ENCODE measurements at regions of chr11 and their contacts with region 1.

Region 1: GRCh38 chr11:112226062-112226830 is at the start of gene PTS:
- DNase-seq: peak; percentile 66 to 94 (median 82)
- ATAC-seq: peak; percentile 89
- H3K4me3 ChIP-seq: peak within 1 kb of the TSS; percentile 71 to 81
- H3K4me3 Mint-ChIP-seq: peak within 1 kb of the TSS; percentile 95
- H3K27ac ChIP-seq: peak within 1 kb of the TSS; percentile 91 to 100
- H3K27ac Mint-ChIP-seq: peak within 1 kb of the TSS; percentile 99
- H3K4me1 ChIP-seq: peaks cover 10% of the 10 kb centered on the region
- H3K4me1 Mint-ChIP-seq: peaks cover 31% of the 10 kb centered on the region
- H3K27me3 ChIP-seq: no peaks in the 10 kb centered on the region
- H3K27me3 Mint-ChIP-seq: no peaks in the 10 kb centered on the region
- CTCF ChIP-seq: no peak
- total RNA-seq, gene PTS: 83.5 to 87.9 TPM

Region 2: GRCh38 chr11:111851636-111852035 is 374.6 kb before region 1 on chr11:
- CTCF ChIA-PET with region 1: no interaction called
- POLR2A ChIA-PET with region 1: no interaction called
- intact Hi-C with region 1: no loop called
- DNase-seq: no peak
- ATAC-seq: no peak
- H3K4me3 ChIP-seq: no peak overlapping the region
- H3K4me3 Mint-ChIP-seq: no peak overlapping the region
- H3K27ac ChIP-seq: no peak overlapping the region
- H3K27ac Mint-ChIP-seq: no peak overlapping the region
- H3K4me1 ChIP-seq: no peaks in the 10 kb centered on the region
- H3K4me1 Mint-ChIP-seq: no peaks in the 10 kb centered on the region
- H3K27me3 ChIP-seq: no peaks in the 10 kb centered on the region
- H3K27me3 Mint-ChIP-seq: no peaks in the 10 kb centered on the region
- CTCF ChIP-seq: no peak

Region 3: DNA sequence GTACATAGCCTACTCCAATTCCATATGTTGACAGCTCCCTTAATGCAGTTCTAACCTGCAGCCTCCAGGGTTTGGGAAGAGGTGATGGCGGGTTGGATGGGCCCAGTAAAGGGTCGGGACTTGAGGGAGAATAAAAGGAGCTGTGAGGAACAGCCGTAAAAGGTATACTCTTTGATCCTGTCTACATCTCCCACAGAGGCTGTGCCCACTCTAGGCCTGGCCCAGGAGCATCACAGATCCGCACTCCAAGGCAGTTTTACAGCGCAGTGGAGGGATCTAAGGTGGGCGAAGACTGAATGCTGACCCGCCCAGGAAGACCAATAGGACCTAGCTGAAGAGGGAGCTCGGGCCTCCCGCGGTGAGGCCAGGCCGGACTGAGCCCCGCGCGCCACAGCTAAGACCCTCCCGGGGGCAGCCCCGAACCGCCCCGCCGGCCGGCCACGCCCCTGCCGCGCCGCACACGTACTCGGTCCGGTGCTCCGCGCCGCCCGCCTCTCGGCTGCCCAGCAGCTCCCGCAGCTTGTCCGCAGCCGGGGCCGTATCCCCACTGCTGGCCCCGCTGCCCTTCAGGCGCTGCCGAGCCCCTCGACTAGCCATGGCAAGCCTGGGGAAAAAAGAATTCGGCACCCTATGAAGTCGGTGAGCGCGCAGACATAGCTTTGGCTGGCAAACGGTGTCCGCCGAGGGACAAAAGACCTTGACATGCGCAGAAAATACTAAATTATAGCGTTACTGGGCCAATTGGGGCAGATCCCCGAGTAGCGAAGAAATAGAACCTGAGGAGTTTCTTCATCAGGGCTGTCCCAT is 355.2 kb before region 1 on chr11 and contains the start of gene ALG9:
- CTCF ChIA-PET with region 1: no interaction called
- POLR2A ChIA-PET with region 1: no interaction called
- intact Hi-C with region 1: loop called in 1 of 2 experiments (anchors 2 kb)
- DNase-seq: peak; percentile 80 to 93 (median 89)
- ATAC-seq: peak; percentile 87
- H3K4me3 ChIP-seq: peak within 1 kb of the TSS; percentile 51 to 70
- H3K4me3 Mint-ChIP-seq: peak within 1 kb of the TSS; percentile 93
- H3K27ac ChIP-seq: peak within 1 kb of the TSS; percentile 76 to 77
- H3K27ac Mint-ChIP-seq: peak within 1 kb of the TSS; percentile 97
- H3K4me1 ChIP-seq: peaks cover 18% of the 10 kb centered on the region
- H3K4me1 Mint-ChIP-seq: peaks cover 34% of the 10 kb centered on the region
- H3K27me3 ChIP-seq: no peaks in the 10 kb centered on the region
- H3K27me3 Mint-ChIP-seq: no peaks in the 10 kb centered on the region
- CTCF ChIP-seq: peak; percentile 18
- total RNA-seq, gene ALG9: 35.5 to 36.9 TPM

Region 4: GRCh38 chr11:112074026-112074811 is 152.0 kb before region 1 on chr11 and contains the start of gene NKAPD1:
- CTCF ChIA-PET with region 1: no interaction called
- POLR2A ChIA-PET with region 1: no interaction called
- intact Hi-C with region 1: loop called (anchors 5 kb)
- DNase-seq: peak; percentile 64 to 92 (median 82)
- ATAC-seq: peak; percentile 79
- H3K4me3 ChIP-seq: peak within 1 kb of the TSS; percentile 79 to 87
- H3K4me3 Mint-ChIP-seq: peak within 1 kb of the TSS; percentile 96
- H3K27ac ChIP-seq: peak within 1 kb of the TSS; percentile 70 to 80
- H3K27ac Mint-ChIP-seq: peak within 1 kb of the TSS; percentile 95
- H3K4me1 ChIP-seq: peaks cover 12% of the 10 kb centered on the region
- H3K4me1 Mint-ChIP-seq: peaks cover 33% of the 10 kb centered on the region
- H3K27me3 ChIP-seq: no peaks in the 10 kb centered on the region
- H3K27me3 Mint-ChIP-seq: peaks cover 7% of the 10 kb centered on the region
- CTCF ChIP-seq: no peak
- total RNA-seq, gene NKAPD1: 16.3 to 17.0 TPM

Region 5: DNA sequence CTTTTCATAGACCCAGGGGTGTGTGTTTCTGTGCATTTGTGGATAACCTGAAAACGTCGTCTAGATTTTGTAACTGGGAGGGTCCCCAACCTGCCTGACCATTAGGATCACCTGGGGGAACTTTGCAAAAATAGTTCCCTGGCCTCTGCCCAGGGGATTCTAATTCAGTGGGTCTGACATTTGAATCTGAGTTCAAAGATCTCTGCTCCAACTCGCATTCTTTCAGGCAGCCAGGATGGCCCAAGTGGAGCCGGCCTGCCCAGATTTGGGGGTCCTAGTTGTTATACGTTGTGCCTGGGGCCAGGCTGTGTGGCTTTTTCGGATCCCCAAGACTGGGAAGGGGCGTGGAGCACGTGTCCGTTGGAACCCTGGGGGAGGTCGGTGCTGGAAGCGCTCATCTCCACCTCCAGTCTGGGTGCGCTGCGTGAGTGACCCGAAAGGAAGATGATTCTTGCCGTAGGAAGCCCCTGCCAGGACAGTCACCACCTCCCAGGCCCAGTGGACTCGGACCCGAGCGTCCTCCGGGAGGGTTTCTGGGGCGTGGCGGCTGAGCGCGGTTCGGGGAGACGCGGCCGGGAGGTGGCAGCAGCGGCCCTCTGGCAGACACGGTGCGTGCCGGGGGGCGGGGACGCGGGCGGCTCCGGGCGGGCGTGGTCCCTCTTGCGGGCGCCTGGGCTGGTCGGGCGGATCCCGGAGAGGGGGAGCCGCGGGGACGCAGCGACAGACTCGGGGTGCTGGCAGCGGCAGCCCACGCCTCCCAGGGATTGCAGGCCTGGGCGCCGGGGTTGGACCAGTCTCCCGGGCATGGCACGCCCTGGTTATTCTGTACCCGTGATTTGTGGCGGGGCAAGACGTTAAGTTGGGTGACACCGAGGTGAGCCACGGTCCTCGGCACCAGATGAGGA is 63.6 kb after region 1 on chr11:
- CTCF ChIA-PET with region 1: interaction called, 481 read pairs
- POLR2A ChIA-PET with region 1: no interaction called
- intact Hi-C with region 1: loop called in 1 of 2 experiments (anchors 2 kb)
- DNase-seq: peak; percentile 62 to 91 (median 86)
- ATAC-seq: peak; percentile 99
- H3K4me3 ChIP-seq: peak overlapping the region; percentile 43 to 53
- H3K4me3 Mint-ChIP-seq: peak overlapping the region; percentile 75
- H3K27ac ChIP-seq: no peak overlapping the region
- H3K27ac Mint-ChIP-seq: no peak overlapping the region
- H3K4me1 ChIP-seq: peaks cover 6% of the 10 kb centered on the region
- H3K4me1 Mint-ChIP-seq: peaks cover 14% of the 10 kb centered on the region
- H3K27me3 ChIP-seq: no peaks in the 10 kb centered on the region
- H3K27me3 Mint-ChIP-seq: no peaks in the 10 kb centered on the region
- CTCF ChIP-seq: peak; percentile 82

Region 6: GRCh38 chr11:113875234-113876073 is 1649.2 kb after region 1 on chr11 and contains the start of gene USP28:
- CTCF ChIA-PET with region 1: no interaction called
- POLR2A ChIA-PET with region 1: no interaction called
- intact Hi-C with region 1: loop called (anchors 5 to 10 kb)
- DNase-seq: peak; percentile 45 to 90 (median 76)
- ATAC-seq: peak; percentile 85
- H3K4me3 ChIP-seq: peak within 1 kb of the TSS; percentile 80 to 95
- H3K4me3 Mint-ChIP-seq: peak within 1 kb of the TSS; percentile 96
- H3K27ac ChIP-seq: peak within 1 kb of the TSS; percentile 52 to 88
- H3K27ac Mint-ChIP-seq: peak within 1 kb of the TSS; percentile 97
- H3K4me1 ChIP-seq: peaks cover 11% of the 10 kb centered on the region
- H3K4me1 Mint-ChIP-seq: peaks cover 48% of the 10 kb centered on the region
- H3K27me3 ChIP-seq: no peaks in the 10 kb centered on the region
- H3K27me3 Mint-ChIP-seq: no peaks in the 10 kb centered on the region
- CTCF ChIP-seq: no peak
- total RNA-seq, gene USP28: 6.4 to 6.8 TPM